Aorta (tissue), 5 donors: ENCODE measurements at regions of chr6 and their contacts with region 1.

Region 1: DNA sequence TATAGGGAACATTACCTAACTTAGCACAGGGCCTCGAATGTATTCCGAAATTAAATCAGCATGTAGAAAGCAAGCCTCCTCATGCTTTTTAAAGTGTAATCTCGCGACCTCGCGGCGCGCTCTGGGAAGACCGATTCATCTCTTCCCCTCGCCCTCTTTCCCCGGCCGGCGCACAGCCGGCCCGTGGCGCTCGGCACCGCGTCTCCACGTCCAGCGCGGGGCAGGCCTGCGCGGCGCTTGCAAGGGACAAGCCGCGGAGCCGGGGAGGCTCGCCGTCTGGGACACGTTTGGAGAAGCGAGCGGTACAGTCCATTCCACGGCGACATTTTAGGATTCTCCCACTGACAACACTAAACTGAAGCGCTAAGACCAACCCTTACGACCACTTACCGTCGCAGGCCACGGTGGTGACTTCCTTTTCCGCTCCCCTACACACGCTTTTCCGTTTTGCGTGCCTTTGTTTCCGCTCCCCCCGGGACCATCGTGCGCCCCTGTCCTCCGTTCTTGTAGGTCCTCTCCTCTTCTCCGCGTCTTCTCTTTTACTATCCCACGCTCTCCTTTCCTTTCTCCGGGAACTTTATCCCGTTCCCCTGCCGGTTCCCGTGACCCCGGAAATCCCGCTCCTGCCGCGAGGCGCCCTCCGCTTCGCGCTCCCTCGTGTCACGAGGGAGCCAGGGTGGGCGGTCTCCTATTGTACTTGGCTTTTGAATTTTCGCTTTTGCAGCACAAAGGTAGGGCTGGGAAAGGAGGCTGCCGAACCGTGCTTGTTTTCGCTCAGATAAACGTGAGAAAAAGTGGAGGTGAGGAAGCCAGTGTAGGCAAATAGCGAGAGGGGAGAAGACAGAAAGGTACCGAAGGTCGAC is at the start of gene ECHDC1:
- DNase-seq: peak; percentile 71 to 87
- ATAC-seq: peak; percentile 92
- H3K4me3 ChIP-seq: peak within 1 kb of the TSS; percentile 14 to 66
- H3K27ac ChIP-seq: peak within 1 kb of the TSS in 1 of 2 donors; percentile 2
- H3K4me1 ChIP-seq: peaks cover 0 to 3% of the 10 kb centered on the region in 2 donors
- H3K27me3 ChIP-seq: no peaks in the 10 kb centered on the region
- total RNA-seq, gene ECHDC1: 28.2 to 44.0 TPM

Region 2: GRCh38 chr6:127415096-127415495 is 71.9 kb after region 1 on chr6:
- intact Hi-C with region 1: loop called in 1 of 2 experiments (anchors 10 kb)
- DNase-seq: no peak
- ATAC-seq: no peak
- H3K4me3 ChIP-seq: no peak overlapping the region
- H3K27ac ChIP-seq: no peak overlapping the region
- H3K4me1 ChIP-seq: no peaks in the 10 kb centered on the region
- H3K27me3 ChIP-seq: no peaks in the 10 kb centered on the region

Region 3: GRCh38 chr6:127516666-127517273 is 173.6 kb after region 1 on chr6:
- intact Hi-C with region 1: loop called in 1 of 2 experiments (anchors 10 kb)
- DNase-seq: no peak
- ATAC-seq: no peak
- H3K4me3 ChIP-seq: peak overlapping the region in 1 of 2 donors; percentile 51
- H3K27ac ChIP-seq: no peak overlapping the region
- H3K4me1 ChIP-seq: no peaks in the 10 kb centered on the region
- H3K27me3 ChIP-seq: no peaks in the 10 kb centered on the region